Activated T-helper 1 cell treated with anti-CD3 and anti-CD28 coated beads, Interleukin-12 subunit alpha, Interleukin-12 subunit beta, Interleukin-2, Interleukin-4 antibody, amounts not matched to agents 30 ng/mL and 10 ng/mL and 1 ng/mL, durations not matched to agents 14 hours and 24 hours and 36 hours (primary cell): ENCODE measurements at regions of chr19 and their contacts with region 1.

Region 1: GRCh38 chr19:6767357-6768235 is at the start of gene SH2D3A:
- DNase-seq: peak; percentile 93
- H3K4me3 Mint-ChIP-seq: peak within 1 kb of the TSS; percentile 88
- H3K27ac Mint-ChIP-seq: peak within 1 kb of the TSS; percentile 89
- H3K4me1 Mint-ChIP-seq: peaks cover 53% of the 10 kb centered on the region
- H3K27me3 Mint-ChIP-seq: no peaks in the 10 kb centered on the region
- total RNA-seq, gene SH2D3A: 15.0 and 15.6 TPM in 2 replicates

Region 2: GRCh38 chr19:6632002-6632621 is 135.5 kb before region 1 on chr19:
- intact Hi-C with region 1: loop called (anchors 1 kb)
- DNase-seq: peak; percentile 76
- H3K4me3 Mint-ChIP-seq: no peak overlapping the region
- H3K27ac Mint-ChIP-seq: no peak overlapping the region
- H3K4me1 Mint-ChIP-seq: peaks cover 29% of the 10 kb centered on the region
- H3K27me3 Mint-ChIP-seq: peaks cover 4% of the 10 kb centered on the region

Region 3: GRCh38 chr19:6718741-6719539 is 48.7 kb before region 1 on chr19:
- intact Hi-C with region 1: loop called (anchors 1 kb)
- DNase-seq: no peak
- H3K4me3 Mint-ChIP-seq: no peak overlapping the region
- H3K27ac Mint-ChIP-seq: no peak overlapping the region
- H3K4me1 Mint-ChIP-seq: peaks cover 32% of the 10 kb centered on the region
- H3K27me3 Mint-ChIP-seq: peaks cover 4% of the 10 kb centered on the region

Region 4: GRCh38 chr19:6753178-6754031 is 14.2 kb before region 1 on chr19:
- intact Hi-C with region 1: loop called (anchors 1 kb)
- DNase-seq: peak; percentile 76
- H3K4me3 Mint-ChIP-seq: peak overlapping the region; percentile 75
- H3K27ac Mint-ChIP-seq: peak overlapping the region; percentile 88
- H3K4me1 Mint-ChIP-seq: peaks cover 19% of the 10 kb centered on the region
- H3K27me3 Mint-ChIP-seq: no peaks in the 10 kb centered on the region

Region 5: DNA sequence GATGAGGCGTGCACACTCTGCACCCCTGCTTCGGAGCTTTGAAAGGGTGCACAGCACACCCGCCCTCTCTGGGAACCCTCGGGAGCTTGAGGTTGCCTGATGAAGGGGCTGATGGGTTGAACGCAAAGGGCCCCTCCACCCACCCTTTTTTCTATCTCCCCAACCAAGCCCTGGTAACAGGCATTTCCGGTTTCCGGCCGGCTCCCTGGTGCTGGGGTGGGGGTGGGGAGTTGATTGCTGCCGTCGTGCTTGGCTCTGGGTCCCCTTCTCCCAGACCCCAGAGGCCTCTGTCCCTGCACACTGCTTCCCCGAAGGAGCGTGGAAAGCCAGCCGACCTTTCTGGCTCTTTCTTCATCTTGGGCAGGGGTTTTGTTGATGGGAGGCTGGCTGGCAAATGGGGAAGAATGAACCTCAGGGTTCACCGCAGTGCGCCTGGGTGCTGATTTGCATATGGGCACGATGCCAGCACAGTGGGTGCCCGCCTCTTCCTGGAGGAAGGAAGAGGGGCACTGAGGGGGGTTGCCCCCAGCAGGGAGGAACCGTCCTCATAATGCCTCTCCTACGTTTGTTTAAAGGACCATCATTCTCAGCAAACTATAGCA is 34.0 kb after region 1 on chr19:
- intact Hi-C with region 1: loop called (anchors 1 kb)
- DNase-seq: peak; percentile 72
- H3K4me3 Mint-ChIP-seq: peak overlapping the region; percentile 92
- H3K27ac Mint-ChIP-seq: peak overlapping the region; percentile 99
- H3K4me1 Mint-ChIP-seq: peaks cover 61% of the 10 kb centered on the region
- H3K27me3 Mint-ChIP-seq: no peaks in the 10 kb centered on the region

Region 6: GRCh38 chr19:6828698-6829562 is 61.3 kb after region 1 on chr19:
- intact Hi-C with region 1: loop called (anchors 1 kb)
- DNase-seq: peak; percentile 19
- H3K4me3 Mint-ChIP-seq: no peak overlapping the region
- H3K27ac Mint-ChIP-seq: peak overlapping the region; percentile 49
- H3K4me1 Mint-ChIP-seq: peaks cover 9% of the 10 kb centered on the region
- H3K27me3 Mint-ChIP-seq: no peaks in the 10 kb centered on the region

Region 7: DNA sequence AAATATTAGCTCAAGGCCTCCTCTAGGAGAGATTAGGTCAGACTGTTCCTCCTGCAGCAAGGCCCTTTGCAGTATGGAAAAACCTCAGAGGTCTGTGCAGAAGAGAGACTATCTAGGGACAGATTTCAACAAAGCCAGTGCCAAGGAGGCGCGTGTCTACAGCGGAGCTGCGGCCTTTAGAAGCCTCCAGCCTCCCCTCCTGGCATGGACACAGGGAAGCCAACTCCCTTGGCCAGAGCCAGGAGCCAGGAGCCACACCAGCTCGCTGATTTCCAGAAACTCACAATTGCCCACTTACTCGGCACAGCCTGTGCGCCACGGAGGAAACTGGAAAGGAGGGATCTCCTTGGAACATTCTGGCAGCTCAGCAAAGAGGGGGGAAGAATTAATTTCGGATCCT is 463.2 kb after region 1 on chr19:
- intact Hi-C with region 1: no loop called
- DNase-seq: no peak
- H3K4me3 Mint-ChIP-seq: no peak overlapping the region
- H3K27ac Mint-ChIP-seq: no peak overlapping the region
- H3K4me1 Mint-ChIP-seq: no peaks in the 10 kb centered on the region
- H3K27me3 Mint-ChIP-seq: no peaks in the 10 kb centered on the region